Tibial artery (tissue), 4 donors: ENCODE measurements at regions of chr18 and their contacts with region 1.

Region 1: GRCh38 chr18:34624551-34624950 is 85.5 kb upstream of the DTNA start:
- DNase-seq: no peak
- H3K4me3 ChIP-seq: no peak overlapping the region
- H3K27ac ChIP-seq: no peak overlapping the region
- H3K4me1 ChIP-seq: peaks cover 0 to 29% (median 2%) of the 10 kb centered on the region in 4 donors
- H3K27me3 ChIP-seq: no peaks in the 10 kb centered on the region
- CTCF ChIP-seq: no peak

Region 2: GRCh38 chr18:33231474-33232317 is 1392.9 kb before region 1 on chr18:
- intact Hi-C with region 1: loop called (anchors 5 kb)
- DNase-seq: peak; percentile 50 to 59
- H3K4me3 ChIP-seq: no peak overlapping the region
- H3K27ac ChIP-seq: no peak overlapping the region
- H3K4me1 ChIP-seq: no peaks in the 10 kb centered on the region
- H3K27me3 ChIP-seq: no peaks in the 10 kb centered on the region
- CTCF ChIP-seq: peak; percentile 58 to 78

Region 3: GRCh38 chr18:34592961-34593382 is 31.6 kb before region 1 on chr18:
- intact Hi-C with region 1: no loop called
- DNase-seq: peak; percentile 39 to 78
- H3K4me3 ChIP-seq: peak overlapping the region; percentile 51 to 55
- H3K27ac ChIP-seq: peak overlapping the region; percentile 62 to 78
- H3K4me1 ChIP-seq: peaks cover 0 to 60% (median 23%) of the 10 kb centered on the region in 4 donors
- H3K27me3 ChIP-seq: no peaks in the 10 kb centered on the region
- CTCF ChIP-seq: no peak